Dendritic cell treated with granulocyte-macrophage colony-stimulating factor and Interleukin-4, amounts not matched to agents 40 ng/mL and 50 ng/mL, for 4 days (primary cell): ENCODE measurements at regions of chr15 and their contacts with region 1.

Region 1: DNA sequence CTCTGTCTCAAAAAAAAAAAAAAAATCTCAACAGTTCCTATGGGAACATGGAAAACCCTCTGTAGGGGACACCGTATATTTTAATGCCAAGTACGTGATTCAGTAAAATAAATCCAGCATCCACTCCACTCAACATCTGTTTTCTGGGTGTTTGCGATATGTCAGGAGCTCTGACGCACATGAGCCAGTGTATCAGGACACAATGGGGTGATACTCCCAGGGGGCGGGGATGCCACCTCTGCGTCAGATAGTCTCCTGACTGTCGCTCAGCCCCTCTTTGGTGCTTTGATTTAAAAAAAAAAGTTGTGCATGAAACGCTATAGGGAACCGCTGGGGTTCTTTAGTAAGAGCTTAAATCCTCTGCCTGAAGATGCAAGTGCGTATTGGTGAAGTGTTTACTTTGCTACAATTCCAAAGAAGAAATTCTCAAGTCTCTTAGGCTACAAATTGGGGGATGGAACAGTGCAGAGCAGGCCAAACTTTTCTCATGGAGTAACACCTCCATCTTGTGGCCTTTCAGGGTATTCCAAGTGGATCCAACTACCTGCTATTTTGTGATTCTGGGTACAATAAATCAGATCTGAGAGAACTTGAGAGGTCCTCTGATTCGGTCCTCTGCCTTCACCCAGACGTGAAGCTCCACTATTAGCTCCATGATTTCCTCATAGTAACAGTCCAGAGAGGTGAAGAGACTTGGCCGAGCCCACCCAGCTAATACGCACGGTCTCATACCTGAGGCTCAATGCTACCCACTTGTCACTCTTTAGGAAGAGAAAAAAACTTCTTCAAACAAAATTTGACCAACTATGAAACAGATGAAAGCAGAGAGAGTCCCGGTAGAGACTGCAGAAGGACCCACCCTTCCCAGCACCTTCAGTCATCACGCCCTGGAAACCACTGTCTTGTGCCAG is 9.3 kb upstream of the NR2E3 start:
- H3K4me3 Mint-ChIP-seq: no peak overlapping the region
- H3K27ac Mint-ChIP-seq: no peak overlapping the region
- H3K4me1 Mint-ChIP-seq: no peaks in the 10 kb centered on the region
- H3K27me3 Mint-ChIP-seq: peaks cover 10% of the 10 kb centered on the region

Region 2: DNA sequence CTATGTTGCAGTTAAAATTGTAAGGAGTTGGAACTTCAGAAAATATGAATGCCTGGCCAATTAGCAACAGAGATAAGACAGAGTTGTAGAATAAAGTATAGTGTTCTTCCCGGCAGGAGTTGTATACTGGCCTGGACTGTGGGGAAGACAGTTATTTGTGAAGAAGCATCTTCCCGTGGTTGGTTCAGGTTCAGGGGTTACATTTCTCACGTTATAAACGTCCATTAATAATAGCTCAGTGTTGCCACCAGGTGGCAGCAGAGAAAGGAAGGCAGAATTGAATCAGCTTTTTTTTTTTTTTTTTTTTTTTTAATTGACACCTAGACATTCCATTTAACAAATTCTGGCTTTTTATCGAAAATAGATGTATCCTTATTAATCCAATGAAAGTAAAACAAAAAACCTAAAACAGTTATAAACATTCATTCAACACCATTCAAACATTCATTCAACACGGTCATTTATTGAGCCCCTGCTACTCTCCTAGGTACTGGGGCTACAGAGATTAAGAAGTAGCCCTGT is 57.2 kb before region 1 on chr15:
- intact Hi-C with region 1: loop called (anchors 2 kb)
- H3K4me3 Mint-ChIP-seq: no peak overlapping the region
- H3K27ac Mint-ChIP-seq: no peak overlapping the region
- H3K4me1 Mint-ChIP-seq: no peaks in the 10 kb centered on the region
- H3K27me3 Mint-ChIP-seq: no peaks in the 10 kb centered on the region

Region 3: DNA sequence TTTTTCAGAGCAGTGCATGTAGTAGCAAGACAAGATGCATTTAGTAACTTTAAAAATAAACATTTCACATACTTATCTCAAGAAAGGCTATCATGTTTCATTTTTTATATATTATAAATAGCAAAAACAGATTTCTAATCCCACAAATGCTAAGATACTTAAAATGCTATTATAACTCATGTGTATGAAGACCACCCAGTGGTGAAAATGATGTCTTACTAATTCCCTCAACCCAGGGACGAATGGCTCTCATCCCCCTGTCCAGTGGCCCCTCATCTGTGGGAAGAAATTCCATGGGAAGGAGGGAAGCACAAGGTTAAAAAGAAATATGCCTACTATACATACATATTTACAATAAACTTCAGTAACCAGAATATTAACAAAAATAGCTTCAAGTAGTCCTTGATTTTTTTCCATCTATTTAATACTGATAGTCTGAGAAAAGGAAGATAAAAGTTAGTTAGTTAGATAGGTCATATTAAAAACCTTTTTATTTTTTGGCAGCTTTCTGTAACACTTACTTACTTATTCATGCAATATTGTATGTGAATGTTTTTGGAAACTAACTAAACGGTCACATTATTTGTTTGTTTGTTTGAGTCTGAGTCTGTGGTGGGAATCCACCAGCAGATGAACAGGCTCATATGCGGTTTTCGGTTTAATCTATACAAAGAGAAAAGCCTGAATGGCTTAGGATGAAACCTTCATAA is 24.1 kb after region 1 on chr15:
- intact Hi-C with region 1: no loop called
- H3K4me3 Mint-ChIP-seq: no peak overlapping the region
- H3K27ac Mint-ChIP-seq: no peak overlapping the region
- H3K4me1 Mint-ChIP-seq: peaks cover 4% of the 10 kb centered on the region
- H3K27me3 Mint-ChIP-seq: no peaks in the 10 kb centered on the region

Region 4: GRCh38 chr15:71874245-71874644 is 73.2 kb after region 1 on chr15:
- intact Hi-C with region 1: no loop called
- H3K4me3 Mint-ChIP-seq: no peak overlapping the region
- H3K27ac Mint-ChIP-seq: no peak overlapping the region
- H3K4me1 Mint-ChIP-seq: peaks cover 8% of the 10 kb centered on the region
- H3K27me3 Mint-ChIP-seq: no peaks in the 10 kb centered on the region